ENCODE measurements at regions of chr1 and their contacts with region 1.

Region 1: GRCh38 chr1:1430114-1430982 is 5.1 kb upstream of the VWA1 start:
- DNase-seq: peak; percentile 83 to 93 (median 87)
- ATAC-seq: peak; percentile 25 to 57 (median 46)
- H3K4me3 ChIP-seq: peak overlapping the region in 7 of 12 donors; percentile 5 to 34 (median 22)
- H3K27ac ChIP-seq: peak overlapping the region; percentile 73 to 99 (median 91)
- H3K4me1 ChIP-seq: peaks cover 13 to 74% (median 63%) of the 10 kb centered on the region in 12 donors
- H3K27me3 ChIP-seq: peaks cover 0 to 35% (median 4%) of the 10 kb centered on the region in 9 donors
- CTCF ChIP-seq: peak in 7 of 12 donors; percentile 6 to 46 (median 27)
- POLR2A ChIP-seq: no peak

Region 2: DNA sequence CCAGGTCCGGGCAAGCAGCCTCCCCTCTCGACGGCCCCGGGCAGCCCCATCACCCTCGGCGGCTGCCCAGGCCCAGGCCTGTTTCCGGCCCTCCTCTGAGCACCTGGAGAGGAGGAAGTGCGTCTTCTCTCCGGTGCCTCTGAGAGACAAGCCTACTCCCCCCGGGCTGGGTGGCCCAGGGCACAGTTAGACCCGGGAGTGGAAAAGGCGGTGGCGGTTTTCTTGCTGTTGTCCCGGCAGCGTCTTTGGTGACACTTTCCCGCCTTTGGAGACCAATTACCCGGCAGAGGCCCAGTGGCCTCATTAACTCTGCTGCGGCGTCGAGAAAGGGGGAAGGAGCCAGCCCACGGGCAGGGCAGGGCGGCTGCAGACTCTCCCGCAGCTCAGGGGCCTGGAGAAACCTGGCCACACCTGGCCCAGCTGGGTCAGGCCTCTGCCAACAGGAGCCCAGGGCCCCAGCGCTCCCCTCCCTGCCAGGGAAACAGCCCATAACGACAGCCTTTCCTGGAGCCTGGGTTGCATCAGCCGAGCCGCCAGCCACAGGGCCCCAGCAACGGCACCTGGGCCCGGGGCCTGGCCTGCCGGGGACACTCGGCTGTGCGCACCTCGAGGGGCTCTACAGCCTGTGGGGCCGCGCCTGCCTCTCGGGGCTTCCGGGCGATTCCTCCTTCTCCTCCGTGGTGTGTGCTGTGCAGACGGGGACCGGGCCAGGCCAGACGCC is 286.1 kb before region 1 on chr1:
- intact Hi-C with region 1: no loop called
- DNase-seq: no peak
- ATAC-seq: no peak
- H3K4me3 ChIP-seq: no peak overlapping the region
- H3K27ac ChIP-seq: peak overlapping the region in 1 of 12 donors; percentile 62
- H3K4me1 ChIP-seq: peaks cover 0 to 6% (median 0%) of the 10 kb centered on the region in 12 donors
- H3K27me3 ChIP-seq: peaks cover 0 to 19% (median 11%) of the 10 kb centered on the region in 9 donors
- CTCF ChIP-seq: no peak
- POLR2A ChIP-seq: no peak

Region 3: GRCh38 chr1:1307908-1308755 is 122.2 kb before region 1 on chr1 and contains the starts of genes ACAP3 and PUSL1:
- intact Hi-C with region 1: no loop called
- DNase-seq: peak; percentile 89 to 94 (median 93)
- ATAC-seq: peak; percentile 38 to 78 (median 71)
- H3K4me3 ChIP-seq: peak within 1 kb of the TSS; percentile 71 to 95 (median 90)
- H3K27ac ChIP-seq: peak within 1 kb of the TSS; percentile 89 to 100 (median 96)
- H3K4me1 ChIP-seq: peaks cover 18 to 58% (median 45%) of the 10 kb centered on the region in 12 donors
- H3K27me3 ChIP-seq: no peaks in the 10 kb centered on the region
- CTCF ChIP-seq: peak in 3 of 12 donors; percentile 3 to 19 (median 11)
- POLR2A ChIP-seq: no peak
- total RNA-seq, gene ACAP3: 28.7 to 56.3 (median 34.1) TPM
- total RNA-seq, gene PUSL1: 6.8 to 17.7 (median 9.7) TPM

Region 4: DNA sequence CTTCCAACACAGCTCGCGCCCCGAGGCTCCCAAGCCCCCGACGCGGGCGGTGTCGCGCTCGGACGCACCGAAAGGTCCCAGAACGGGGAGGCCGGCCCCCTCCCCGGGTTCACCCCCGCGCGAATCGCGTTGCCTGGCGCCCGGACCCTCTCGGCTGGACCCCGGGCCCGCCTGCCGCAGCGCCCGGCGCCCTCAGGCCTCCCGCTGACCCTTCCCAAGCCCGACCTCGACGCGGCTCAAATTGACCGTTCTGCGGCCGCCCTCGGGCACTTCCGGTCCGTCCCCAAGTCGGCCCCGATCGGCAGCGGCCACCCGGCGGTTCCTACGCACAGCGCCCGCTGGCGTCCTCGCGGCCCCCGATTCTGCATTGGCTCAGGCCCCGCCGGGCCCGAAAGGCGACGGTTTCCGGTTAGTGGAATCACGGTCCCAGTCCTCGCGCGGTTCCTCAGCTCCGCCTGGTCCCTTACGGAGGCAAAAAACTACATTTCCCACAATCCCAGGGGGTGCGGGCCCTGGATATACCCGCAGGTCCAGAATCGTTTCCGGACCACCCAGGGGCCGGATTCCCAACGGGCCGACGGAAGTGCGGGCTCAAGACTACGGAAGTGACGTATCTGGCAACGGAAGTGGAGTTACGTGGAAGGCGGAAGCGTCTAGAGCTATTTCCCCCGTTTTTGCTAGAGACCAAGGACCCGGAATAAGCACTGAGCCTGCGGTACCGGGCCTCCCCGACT is 55.3 kb before region 1 on chr1 and contains the start of gene AURKAIP1:
- intact Hi-C with region 1: no loop called
- DNase-seq: peak; percentile 98 to 99 (median 99)
- ATAC-seq: peak; percentile 95 to 98 (median 96)
- H3K4me3 ChIP-seq: peak within 1 kb of the TSS; percentile 78 to 100 (median 94)
- H3K27ac ChIP-seq: peak within 1 kb of the TSS; percentile 82 to 99 (median 96)
- H3K4me1 ChIP-seq: peaks cover 10 to 42% (median 33%) of the 10 kb centered on the region in 12 donors
- H3K27me3 ChIP-seq: no peaks in the 10 kb centered on the region
- CTCF ChIP-seq: peak in 6 of 12 donors; percentile 17 to 62 (median 34)
- POLR2A ChIP-seq: peak; percentile 12 to 76
- total RNA-seq, gene AURKAIP1: 157 to 273 (median 188) TPM

Region 5: GRCh38 chr1:1406817-1407635 is 23.3 kb before region 1 on chr1 and contains the start of gene MRPL20:
- intact Hi-C with region 1: loop called in 1 of 10 experiments (anchors 2 kb)
- DNase-seq: peak; percentile 94 to 97 (median 96)
- ATAC-seq: peak; percentile 92 to 100 (median 98)
- H3K4me3 ChIP-seq: peak within 1 kb of the TSS; percentile 61 to 100 (median 94)
- H3K27ac ChIP-seq: peak within 1 kb of the TSS; percentile 72 to 94 (median 88)
- H3K4me1 ChIP-seq: peaks cover 5 to 43% (median 33%) of the 10 kb centered on the region in 12 donors
- H3K27me3 ChIP-seq: no peaks in the 10 kb centered on the region
- CTCF ChIP-seq: no peak
- POLR2A ChIP-seq: peak in 1 of 2 donors; percentile 71
- total RNA-seq, gene MRPL20: 112 to 208 (median 128) TPM

Region 6: DNA sequence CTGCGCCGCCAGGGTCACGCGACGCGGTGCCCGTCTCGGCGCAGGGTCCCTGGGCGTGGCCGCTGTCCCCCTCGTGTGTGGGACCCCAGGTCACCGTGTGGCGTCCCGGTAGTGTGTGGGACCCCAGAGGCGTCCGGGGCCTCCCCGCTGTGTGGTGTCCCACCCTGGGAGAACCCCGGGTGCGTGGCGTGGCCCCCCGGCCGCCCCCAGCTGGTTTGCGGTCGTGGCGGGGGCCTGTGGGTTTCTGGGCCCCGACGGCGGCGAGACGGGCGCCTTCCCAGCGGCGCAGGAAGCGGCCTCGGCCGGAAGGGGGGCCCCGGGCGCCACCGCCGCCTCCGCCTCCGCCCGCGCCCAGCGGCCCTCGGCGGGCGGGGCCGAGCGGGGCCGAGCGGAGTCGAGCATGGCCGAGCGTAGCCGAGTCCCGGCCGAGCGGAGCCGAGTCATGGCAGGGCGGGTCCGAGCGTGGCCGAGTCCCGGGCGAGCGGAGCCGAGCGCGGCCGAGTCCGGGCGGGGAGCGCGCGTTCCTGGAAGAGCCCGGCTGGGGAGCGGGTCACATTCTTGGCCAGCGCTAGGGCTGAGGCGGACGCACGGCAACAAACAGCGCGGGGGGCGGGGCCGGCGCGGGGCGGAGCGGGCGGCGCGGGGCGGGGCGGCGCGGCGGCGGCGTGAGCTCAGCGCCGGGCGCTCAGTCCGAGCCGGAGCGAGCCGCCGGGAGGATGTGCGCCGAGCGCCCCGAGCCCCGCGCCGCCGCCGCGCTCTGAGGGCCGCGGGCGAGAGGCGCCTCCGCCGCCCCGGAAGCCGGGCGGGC is 797.2 kb after region 1 on chr1:
- intact Hi-C with region 1: no loop called
- DNase-seq: peak; percentile 96 to 99 (median 97)
- ATAC-seq: peak; percentile 83 to 93 (median 86)
- H3K4me3 ChIP-seq: peak overlapping the region; percentile 58 to 96 (median 85)
- H3K27ac ChIP-seq: peak overlapping the region; percentile 98 to 100 (median 100)
- H3K4me1 ChIP-seq: peaks cover 0 to 52% (median 31%) of the 10 kb centered on the region in 12 donors
- H3K27me3 ChIP-seq: no peaks in the 10 kb centered on the region
- CTCF ChIP-seq: peak in 1 of 12 donors; percentile 14
- POLR2A ChIP-seq: peak; percentile 19 to 86

Measured in heart left ventricle (tissue), 16 donors.